A549 (cell line): ENCODE measurements at regions of chr11 and their contacts with region 1.

Region 1: DNA sequence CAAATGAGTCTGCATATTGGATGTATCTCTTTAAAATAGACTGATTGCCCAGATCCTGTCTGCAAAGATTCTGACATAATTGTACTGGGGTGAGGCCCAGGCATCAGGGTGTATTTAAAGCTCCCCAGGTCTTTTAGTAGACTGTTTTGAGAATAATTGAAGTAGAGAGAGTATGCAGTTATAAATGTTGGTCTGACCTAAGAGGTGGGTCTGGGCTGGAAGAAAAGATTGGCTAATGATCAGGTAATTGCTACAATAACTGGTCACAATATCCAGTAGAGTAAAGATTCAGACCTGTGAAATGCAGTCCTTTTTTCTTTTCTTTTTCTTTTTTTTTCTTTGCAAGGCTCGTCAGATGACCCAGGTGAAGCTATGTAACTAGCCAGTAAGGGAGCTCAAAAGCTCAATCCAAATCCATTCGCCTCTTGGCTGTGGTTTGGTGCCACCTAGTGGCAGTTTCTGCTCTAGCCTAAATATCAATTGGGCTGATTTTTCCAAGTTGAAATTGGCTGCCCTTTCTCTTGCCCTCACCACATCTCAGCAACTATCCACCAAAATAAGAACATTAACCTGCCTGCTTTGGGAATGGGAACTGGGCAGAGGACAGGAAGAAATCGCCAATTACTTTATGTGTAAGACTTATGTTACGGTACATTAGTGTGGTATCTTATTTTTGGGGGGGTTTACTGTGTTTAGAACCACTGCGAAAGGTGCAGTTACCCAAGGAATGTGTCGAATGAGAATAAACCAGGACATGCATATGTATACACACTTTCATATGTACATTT is 45.9 kb downstream of the ZNF143 start:
- DNase-seq: peak; percentile 55 to 81
- ATAC-seq: peak; percentile 94 to 96
- H3K4me3 ChIP-seq: no peak overlapping the region
- H3K27ac ChIP-seq: no peak overlapping the region
- H3K4me1 ChIP-seq: peaks cover 29% of the 10 kb centered on the region
- CTCF ChIP-seq: peak; percentile 97
- EP300 ChIP-seq: no peak
- POLR2A ChIP-seq: no peak
- RAD21 ChIP-seq: peak; percentile 92 to 96

Region 2: GRCh38 chr11:9460322-9461067 is 46.2 kb before region 1 on chr11 and contains the start of gene ZNF143:
- CTCF ChIA-PET with region 1: interaction called, 5 read pairs
- POLR2A ChIA-PET with region 1: interaction called, 14 read pairs
- DNase-seq: peak; percentile 97 to 100
- ATAC-seq: peak; percentile 92 to 93
- H3K4me3 ChIP-seq: peak within 1 kb of the TSS; percentile 83
- H3K27ac ChIP-seq: peak within 1 kb of the TSS; percentile 99
- H3K4me1 ChIP-seq: peaks cover 20% of the 10 kb centered on the region
- CTCF ChIP-seq: no peak
- EP300 ChIP-seq: no peak
- POLR2A ChIP-seq: peak; percentile 80
- RAD21 ChIP-seq: no peak
- polyA plus RNA-seq, gene ZNF143: 37.7 and 38.4 TPM in 2 replicates

Region 3: DNA sequence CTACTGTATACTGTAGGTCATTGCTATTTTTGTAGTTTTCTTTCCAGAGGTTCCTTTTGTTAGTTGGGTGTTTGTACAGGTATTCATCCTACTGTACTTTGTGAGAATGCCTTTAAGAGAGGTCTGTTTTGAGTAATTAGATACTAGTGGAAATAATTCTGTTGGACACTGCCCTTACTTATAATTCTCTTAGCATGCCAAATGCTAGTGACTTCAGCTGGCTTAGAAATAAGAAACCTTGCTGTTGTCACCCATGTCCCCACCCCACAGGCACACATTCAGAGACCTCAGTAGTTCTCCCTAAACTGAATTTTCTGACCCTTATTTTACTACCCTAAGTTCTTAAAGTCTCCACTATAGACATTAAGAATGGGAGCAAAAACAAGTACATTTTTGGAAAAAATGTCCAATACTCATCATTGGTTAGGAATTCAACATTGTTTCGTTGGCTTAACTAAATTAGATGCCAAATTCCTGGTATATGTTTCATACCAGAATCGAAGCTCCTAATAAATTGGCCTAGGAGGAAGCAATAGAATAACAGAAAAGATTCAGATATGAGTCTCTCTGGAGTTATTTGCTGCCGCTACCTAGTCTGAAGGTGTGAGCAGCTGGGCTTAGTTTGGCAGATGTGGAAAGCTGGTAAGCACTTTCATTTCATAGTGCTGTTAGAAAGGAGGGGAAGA is 17.5 kb before region 1 on chr11:
- CTCF ChIA-PET with region 1: interaction called, 14 read pairs
- POLR2A ChIA-PET with region 1: no interaction called
- DNase-seq: no peak
- ATAC-seq: no peak
- H3K4me3 ChIP-seq: no peak overlapping the region
- H3K27ac ChIP-seq: no peak overlapping the region
- H3K4me1 ChIP-seq: no peaks in the 10 kb centered on the region
- CTCF ChIP-seq: no peak
- EP300 ChIP-seq: no peak
- POLR2A ChIP-seq: no peak
- RAD21 ChIP-seq: no peak

Region 4: DNA sequence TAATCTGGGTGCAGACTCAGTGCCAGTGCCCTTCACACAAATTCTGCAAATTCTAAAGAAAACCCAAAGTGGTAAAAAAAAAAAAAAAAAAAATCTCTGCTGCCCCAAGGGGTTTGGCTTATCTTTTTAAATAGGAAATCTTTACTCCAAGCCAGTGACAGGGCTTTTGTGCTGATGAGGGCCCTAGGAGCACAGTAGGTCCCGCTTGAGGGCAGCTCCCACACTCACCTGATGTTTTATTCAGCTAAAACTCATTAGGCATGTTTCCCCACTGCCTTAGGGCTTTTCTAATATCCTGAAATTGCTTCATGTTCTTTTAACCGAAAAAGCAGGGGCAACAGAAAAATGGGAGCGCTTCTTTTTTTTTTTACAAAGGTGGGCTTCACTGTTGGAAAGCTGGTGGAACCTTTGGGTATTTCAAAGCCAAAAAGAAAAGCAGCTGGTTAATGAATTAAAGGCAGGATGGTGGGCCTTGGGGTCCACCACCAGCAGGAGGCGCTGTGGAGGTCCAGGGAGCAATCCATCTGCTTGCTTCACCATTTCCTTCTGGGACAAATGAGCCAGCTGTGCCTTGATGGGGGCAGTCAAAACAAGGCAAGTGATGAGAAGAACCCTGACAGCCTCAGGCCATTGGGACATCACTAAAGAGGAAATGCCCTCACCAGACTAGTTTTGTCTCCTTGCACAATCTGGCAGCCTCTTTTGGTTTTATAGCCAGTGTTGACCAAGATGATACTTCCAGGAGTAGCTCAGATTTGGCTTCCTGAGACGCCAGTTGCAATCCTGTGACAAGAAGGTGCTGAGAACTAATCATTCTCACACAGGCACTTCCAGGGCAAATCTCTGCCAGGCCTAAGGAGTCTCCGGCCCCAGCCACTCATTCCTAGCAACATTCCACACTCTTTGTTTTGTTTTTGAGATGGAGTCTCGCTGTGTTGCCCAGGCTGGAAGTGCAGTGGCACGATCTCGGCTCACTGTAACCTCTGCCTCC is 28.4 kb after region 1 on chr11:
- CTCF ChIA-PET with region 1: interaction called, 11 read pairs
- POLR2A ChIA-PET with region 1: no interaction called
- DNase-seq: peak in 1 of 2 experiments; percentile 71
- ATAC-seq: peak; percentile 64 to 74; a peak in 4 of 6 replicates
- H3K4me3 ChIP-seq: no peak overlapping the region
- H3K27ac ChIP-seq: peak overlapping the region; percentile 19 to 52; a peak in 4 of 6 replicates
- H3K4me1 ChIP-seq: peaks cover 16% of the 10 kb centered on the region
- CTCF ChIP-seq: peak; percentile 85
- EP300 ChIP-seq: no peak
- POLR2A ChIP-seq: no peak
- RAD21 ChIP-seq: peak; percentile 63 to 74